ENCODE measurements at regions of chr9 and their contacts with region 1.

Region 1: DNA sequence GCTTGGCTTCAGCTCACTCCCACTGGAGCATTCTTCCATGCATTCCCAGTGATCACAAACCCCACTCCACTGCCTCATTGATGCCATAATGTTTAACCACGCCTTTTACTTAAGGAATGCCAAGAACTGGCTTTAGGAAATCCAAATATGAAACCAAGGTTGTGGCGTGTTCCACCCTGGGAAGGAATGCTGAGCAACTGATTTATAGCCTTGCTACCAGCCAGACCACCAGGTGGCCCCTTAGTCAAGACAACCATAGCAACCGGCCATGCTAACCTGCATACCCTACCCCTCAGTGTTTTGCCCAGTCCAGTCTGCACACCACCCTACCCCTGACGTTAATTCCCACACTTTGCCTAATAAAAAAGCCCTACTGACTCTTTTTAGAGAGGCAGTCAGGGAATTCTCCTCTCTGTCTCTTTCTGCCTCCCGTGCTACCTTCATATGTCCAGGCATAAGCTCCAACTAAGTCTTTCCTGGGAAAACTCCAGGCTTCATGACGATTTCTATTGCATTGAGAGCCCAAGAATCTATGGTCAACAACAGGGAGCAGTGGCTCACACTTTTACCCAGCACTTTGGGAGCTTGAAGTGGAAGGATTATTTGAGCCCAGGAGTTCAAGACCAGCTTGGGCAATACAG is 27.0 kb upstream of the PRRC2B start:
- DNase-seq: no peak
- ATAC-seq: peak; percentile 64
- H3K4me3 ChIP-seq: no peak overlapping the region
- H3K27ac ChIP-seq: no peak overlapping the region
- H3K4me1 ChIP-seq: no peaks in the 10 kb centered on the region
- H3K27me3 ChIP-seq: no peaks in the 10 kb centered on the region
- CTCF ChIP-seq: peak; percentile 6 to 50 (median 36); a peak in 3 of 6 replicates
- EP300 ChIP-seq: no peak
- POLR2A ChIP-seq: no peak
- RAD21 ChIP-seq: peak; percentile 40; the same call in 1 of the 2 replicates

Region 2: DNA sequence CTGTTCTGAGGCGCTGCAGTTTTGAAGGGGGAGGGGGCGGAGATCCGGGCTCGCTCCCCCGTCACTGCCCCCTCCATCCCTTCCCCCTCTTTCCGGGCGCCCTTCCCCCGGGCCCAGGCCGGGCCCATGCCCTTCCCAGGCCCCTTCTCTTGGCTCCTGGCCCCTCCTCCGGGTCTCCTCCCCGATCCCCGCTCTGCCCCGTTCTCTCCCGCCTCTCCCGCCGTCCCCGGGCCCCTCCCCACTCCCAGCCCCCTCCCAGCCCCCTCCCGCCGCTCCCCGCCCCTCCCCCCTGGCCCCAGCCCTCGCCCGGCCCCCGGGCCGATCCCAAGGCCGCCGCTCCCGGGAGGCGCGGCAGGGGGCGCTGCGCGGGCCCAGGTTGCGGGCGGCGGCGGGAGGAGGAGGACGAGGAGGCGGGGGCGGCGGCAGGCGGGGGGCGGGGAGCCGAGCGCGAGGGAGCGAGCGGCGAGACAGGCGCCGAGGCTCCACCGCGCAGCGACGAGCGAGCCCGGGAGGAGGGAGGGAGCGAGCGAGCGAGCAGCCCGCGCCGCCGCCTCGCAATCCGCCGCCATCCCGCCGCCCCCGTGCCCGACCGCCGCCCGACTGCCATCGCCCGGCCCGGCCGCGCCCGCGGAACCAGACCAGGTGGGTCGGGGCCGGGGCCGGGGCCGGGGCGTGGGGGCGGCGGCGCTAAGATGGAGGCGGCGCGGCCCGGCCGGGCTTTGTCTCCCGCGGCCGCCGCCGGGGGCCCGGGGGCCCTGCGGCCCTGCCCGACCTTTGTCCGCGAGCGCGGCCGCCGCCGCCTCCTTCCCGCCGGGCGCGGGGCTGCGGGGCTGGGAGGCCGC is 27.0 kb after region 1 on chr9 and contains the start of gene PRRC2B:
- CTCF ChIA-PET with region 1: interaction called, 14 read pairs
- POLR2A ChIA-PET with region 1: no interaction called
- RAD21 ChIA-PET with region 1: interaction called, 14 read pairs
- SMC1A ChIA-PET with region 1: interaction called, 11 read pairs
- in situ Hi-C with region 1: no loop called
- intact Hi-C with region 1: loop called (anchors 2 kb)
- DNase-seq: no peak
- ATAC-seq: peak; percentile 57
- H3K4me3 ChIP-seq: peak within 1 kb of the TSS; percentile 79
- H3K27ac ChIP-seq: peak within 1 kb of the TSS; percentile 87
- H3K4me1 ChIP-seq: peaks cover 25% of the 10 kb centered on the region
- H3K27me3 ChIP-seq: no peaks in the 10 kb centered on the region
- CTCF ChIP-seq: peak in 2 of 3 experiments; percentile 51 to 57; a peak in 4 of 6 replicates
- EP300 ChIP-seq: no peak
- POLR2A ChIP-seq: peak; percentile 92
- RAD21 ChIP-seq: peak; percentile 66
- polyA plus RNA-seq, gene PRRC2B: 0.84 to 2.0 TPM

Region 3: DNA sequence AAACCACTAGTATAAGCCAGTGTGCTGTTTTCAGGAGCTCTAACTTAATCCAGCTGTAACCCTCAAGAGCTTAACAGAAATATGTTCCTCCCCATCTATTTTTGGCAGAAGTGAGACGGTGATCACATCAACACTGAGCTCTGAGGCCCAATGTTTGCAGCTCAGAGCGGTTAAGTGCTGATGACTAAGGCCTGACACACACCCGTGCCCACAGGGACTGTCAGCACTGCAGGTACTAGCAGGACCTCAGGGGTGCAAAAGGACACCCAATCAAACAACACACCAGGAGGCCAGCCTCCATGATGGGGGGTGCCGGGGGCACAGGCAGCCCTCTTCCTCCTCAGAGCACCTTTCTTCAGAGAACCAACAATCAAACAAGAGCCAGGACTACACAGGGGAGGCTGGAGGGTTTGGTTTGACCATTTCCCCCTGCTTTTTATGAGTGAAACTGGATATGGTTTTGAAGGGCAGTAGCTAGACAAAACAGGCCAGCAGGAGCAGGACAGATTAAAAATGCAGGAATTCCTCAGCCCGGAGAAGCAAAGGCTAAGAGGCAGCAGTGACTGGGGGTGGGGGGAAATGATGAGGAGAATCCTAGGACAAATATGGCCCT is 311.7 kb after region 1 on chr9:
- CTCF ChIA-PET with region 1: no interaction called
- POLR2A ChIA-PET with region 1: no interaction called
- RAD21 ChIA-PET with region 1: no interaction called
- SMC1A ChIA-PET with region 1: no interaction called
- in situ Hi-C with region 1: no loop called
- intact Hi-C with region 1: no loop called
- DNase-seq: peak; percentile 87
- ATAC-seq: peak; percentile 94
- H3K4me3 ChIP-seq: peak overlapping the region; percentile 63; the same call in 1 of the 2 replicates
- H3K27ac ChIP-seq: peak overlapping the region; percentile 87
- H3K4me1 ChIP-seq: peaks cover 50% of the 10 kb centered on the region
- H3K27me3 ChIP-seq: no peaks in the 10 kb centered on the region
- CTCF ChIP-seq: no peak
- EP300 ChIP-seq: peak; percentile 60 to 70; a peak in 3 of 4 replicates
- POLR2A ChIP-seq: peak; percentile 75
- RAD21 ChIP-seq: peak; percentile 25; the same call in 1 of the 2 replicates